Calu3 (cell line): ENCODE measurements at regions of chr11 and their contacts with region 1.

Region 1: GRCh38 chr11:92357344-92357743 is 132.7 kb downstream of the FAT3 start:
- DNase-seq: peak; percentile 5
- H3K4me3 Mint-ChIP-seq: no peak overlapping the region
- H3K27ac Mint-ChIP-seq: no peak overlapping the region
- H3K4me1 Mint-ChIP-seq: no peaks in the 10 kb centered on the region
- H3K27me3 Mint-ChIP-seq: no peaks in the 10 kb centered on the region
- CTCF ChIP-seq: no peak

Region 2: GRCh38 chr11:91664521-91664920 is 692.8 kb before region 1 on chr11:
- CTCF ChIA-PET with region 1: no interaction called
- intact Hi-C with region 1: no loop called
- DNase-seq: peak; percentile 5
- H3K4me3 Mint-ChIP-seq: no peak overlapping the region
- H3K27ac Mint-ChIP-seq: no peak overlapping the region
- H3K4me1 Mint-ChIP-seq: no peaks in the 10 kb centered on the region
- H3K27me3 Mint-ChIP-seq: no peaks in the 10 kb centered on the region
- CTCF ChIP-seq: no peak

Region 3: GRCh38 chr11:92552942-92553341 is 195.6 kb after region 1 on chr11:
- CTCF ChIA-PET with region 1: no interaction called
- intact Hi-C with region 1: loop called (anchors 2 kb)
- DNase-seq: no peak
- H3K4me3 Mint-ChIP-seq: no peak overlapping the region
- H3K27ac Mint-ChIP-seq: no peak overlapping the region
- H3K4me1 Mint-ChIP-seq: no peaks in the 10 kb centered on the region
- H3K27me3 Mint-ChIP-seq: no peaks in the 10 kb centered on the region
- CTCF ChIP-seq: no peak